GM10248 (cell line): ENCODE measurements at regions of chr15 and their contacts with region 1.

Region 1: GRCh38 chr15:66912001-66912400 is 153.4 kb upstream of the SMAD3 start:
- DNase-seq: no peak
- CTCF ChIP-seq: no peak

Region 2: GRCh38 chr15:66886241-66886675 is 25.7 kb before region 1 on chr15:
- CTCF ChIA-PET with region 1: no interaction called
- POLR2A ChIA-PET with region 1: no interaction called
- DNase-seq: no peak
- CTCF ChIP-seq: no peak

Region 3: GRCh38 chr15:66901336-66902100 is 10.5 kb before region 1 on chr15:
- CTCF ChIA-PET with region 1: interaction called, 10 read pairs
- POLR2A ChIA-PET with region 1: no interaction called
- DNase-seq: no peak
- CTCF ChIP-seq: no peak